ENCODE measurements at regions of chr3 and their contacts with region 1.

Region 1: GRCh38 chr3:125651244-125651643 is 55.9 kb upstream of the OSBPL11 start:
- DNase-seq: peak; percentile 12
- H3K4me3 Mint-ChIP-seq: no peak overlapping the region
- H3K27ac Mint-ChIP-seq: no peak overlapping the region
- H3K4me1 Mint-ChIP-seq: peaks cover 14% of the 10 kb centered on the region
- H3K27me3 Mint-ChIP-seq: no peaks in the 10 kb centered on the region
- CTCF ChIP-seq: no peak

Region 2: DNA sequence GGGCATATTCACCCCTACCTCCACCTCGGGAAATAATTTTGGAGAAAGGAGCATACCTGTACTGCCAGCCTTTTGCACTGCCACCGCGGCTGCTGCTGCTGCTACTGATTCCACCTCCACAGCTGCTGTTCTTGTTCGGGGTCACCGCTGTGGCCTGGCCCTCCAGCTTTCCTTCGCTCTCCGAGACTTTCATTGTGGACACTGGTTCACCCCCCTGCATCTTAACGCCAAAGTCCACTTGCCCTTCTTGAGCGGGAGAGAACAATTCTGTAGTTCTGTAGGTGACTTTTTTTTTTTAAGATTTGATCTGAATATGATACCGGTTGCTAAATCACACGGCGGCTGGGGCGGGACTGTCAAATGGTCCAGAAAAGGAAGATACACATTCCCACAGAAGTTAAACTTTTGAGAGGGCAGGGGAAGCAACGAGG is 56.6 kb before region 1 on chr3:
- CTCF ChIA-PET with region 1: no interaction called
- POLR2A ChIA-PET with region 1: interaction called, 32 read pairs
- intact Hi-C with region 1: no loop called
- DNase-seq: no peak
- H3K4me3 Mint-ChIP-seq: peak overlapping the region; percentile 92
- H3K27ac Mint-ChIP-seq: peak overlapping the region; percentile 65
- H3K4me1 Mint-ChIP-seq: peaks cover 8% of the 10 kb centered on the region
- H3K27me3 Mint-ChIP-seq: no peaks in the 10 kb centered on the region
- CTCF ChIP-seq: no peak

Region 3: GRCh38 chr3:125602752-125603649 is 48.2 kb before region 1 on chr3:
- CTCF ChIA-PET with region 1: interaction called, 7 read pairs
- POLR2A ChIA-PET with region 1: interaction called, 15 read pairs
- intact Hi-C with region 1: no loop called
- DNase-seq: peak; percentile 87
- H3K4me3 Mint-ChIP-seq: peak overlapping the region; percentile 37
- H3K27ac Mint-ChIP-seq: no peak overlapping the region
- H3K4me1 Mint-ChIP-seq: peaks cover 7% of the 10 kb centered on the region
- H3K27me3 Mint-ChIP-seq: no peaks in the 10 kb centered on the region
- CTCF ChIP-seq: no peak

Region 4: DNA sequence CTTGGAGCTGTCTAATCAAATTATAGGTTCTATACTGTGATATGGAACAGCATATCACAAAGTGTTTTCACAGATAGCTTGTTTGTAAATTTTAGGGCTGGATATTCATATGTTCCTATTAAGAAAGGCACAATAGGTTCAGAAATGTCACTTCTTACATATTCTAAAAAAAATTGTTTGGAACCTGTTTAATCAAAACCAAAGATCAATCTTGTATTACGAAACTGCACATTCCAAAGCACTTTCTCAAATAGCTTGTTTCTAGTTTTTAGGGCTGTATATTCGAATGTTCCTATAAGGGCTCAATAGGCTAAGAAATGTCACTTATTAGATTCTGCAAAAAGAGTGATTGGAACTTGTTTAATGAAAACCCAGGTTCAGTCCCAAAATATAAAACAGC is 11.4 kb after region 1 on chr3:
- CTCF ChIA-PET with region 1: interaction called, 5 read pairs
- POLR2A ChIA-PET with region 1: interaction called, 22 read pairs
- intact Hi-C with region 1: no loop called
- DNase-seq: no peak
- H3K4me3 Mint-ChIP-seq: no peak overlapping the region
- H3K27ac Mint-ChIP-seq: no peak overlapping the region
- H3K4me1 Mint-ChIP-seq: no peaks in the 10 kb centered on the region
- H3K27me3 Mint-ChIP-seq: no peaks in the 10 kb centered on the region
- CTCF ChIP-seq: no peak

Region 5: GRCh38 chr3:125683067-125683829 is 32.0 kb after region 1 on chr3:
- CTCF ChIA-PET with region 1: no interaction called
- POLR2A ChIA-PET with region 1: no interaction called
- intact Hi-C with region 1: no loop called
- DNase-seq: peak; percentile 15
- H3K4me3 Mint-ChIP-seq: no peak overlapping the region
- H3K27ac Mint-ChIP-seq: no peak overlapping the region
- H3K4me1 Mint-ChIP-seq: no peaks in the 10 kb centered on the region
- H3K27me3 Mint-ChIP-seq: no peaks in the 10 kb centered on the region
- CTCF ChIP-seq: no peak

Measured in MCF 10A (cell line).